ENCODE measurements at regions of chr11 and their contacts with region 1.

Region 1: GRCh38 chr11:46238967-46239800 is 38.3 kb upstream of the CREB3L1 start:
- DNase-seq: peak; percentile 67 to 81 (median 77)
- H3K4me3 ChIP-seq: peak overlapping the region; percentile 40 to 81
- H3K4me3 Mint-ChIP-seq: peak overlapping the region; percentile 35 to 90 (median 75)
- H3K27ac ChIP-seq: no peak overlapping the region
- H3K27ac Mint-ChIP-seq: peak overlapping the region in 2 of 7 donors; percentile 42 to 60
- H3K4me1 ChIP-seq: peaks cover 30% of the 10 kb centered on the region
- H3K4me1 Mint-ChIP-seq: peaks cover 18 to 49% (median 24%) of the 10 kb centered on the region in 4 donors
- H3K27me3 ChIP-seq: peaks cover 6% of the 10 kb centered on the region
- H3K27me3 Mint-ChIP-seq: peaks cover 14 to 16% of the 10 kb centered on the region in 2 donors

Region 2: DNA sequence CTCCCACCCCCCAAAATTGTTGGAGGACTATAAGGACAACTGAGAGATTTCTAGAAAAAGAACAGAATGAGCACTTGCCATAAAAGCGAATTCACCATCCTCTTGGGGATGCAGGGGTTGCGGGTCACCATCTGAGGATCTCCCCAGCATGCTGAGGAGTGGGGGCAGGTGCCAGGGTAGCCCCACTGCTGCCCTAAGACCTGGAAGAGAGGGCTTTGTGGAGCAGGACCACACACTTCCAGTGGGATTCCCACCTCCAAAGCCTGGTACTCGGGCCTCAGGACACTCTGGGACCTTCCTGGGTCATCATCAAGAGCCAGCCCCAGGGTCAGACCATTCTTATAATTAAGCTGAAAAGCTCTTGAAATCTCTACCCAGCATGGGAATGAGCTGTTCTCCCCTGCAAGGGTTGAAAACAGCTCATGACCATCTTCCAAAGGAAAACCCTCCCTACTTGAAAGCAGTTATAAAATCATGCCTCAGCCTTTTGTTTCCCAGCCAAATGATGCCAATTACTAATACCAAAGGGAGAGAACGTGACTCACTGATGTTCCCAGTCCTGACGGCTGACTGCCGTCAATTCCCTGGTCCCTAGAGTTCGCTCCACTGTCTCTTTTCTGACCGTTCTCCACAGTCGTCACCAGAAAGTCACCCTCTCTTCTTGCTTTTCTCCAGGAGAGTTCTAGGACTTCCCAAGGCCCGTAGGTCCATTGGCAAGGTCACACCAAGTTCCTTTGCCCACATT is 38.5 kb before region 1 on chr11:
- CTCF ChIA-PET with region 1: no interaction called
- POLR2A ChIA-PET with region 1: no interaction called
- intact Hi-C with region 1: no loop called
- DNase-seq: no peak
- H3K4me3 ChIP-seq: no peak overlapping the region
- H3K4me3 Mint-ChIP-seq: no peak overlapping the region
- H3K27ac ChIP-seq: no peak overlapping the region
- H3K27ac Mint-ChIP-seq: no peak overlapping the region
- H3K4me1 ChIP-seq: no peaks in the 10 kb centered on the region
- H3K4me1 Mint-ChIP-seq: no peaks in the 10 kb centered on the region
- H3K27me3 ChIP-seq: no peaks in the 10 kb centered on the region
- H3K27me3 Mint-ChIP-seq: peaks cover 18 to 26% of the 10 kb centered on the region in 2 donors

Region 3: GRCh38 chr11:46249103-46249937 is 10.1 kb after region 1 on chr11:
- CTCF ChIA-PET with region 1: interaction called, 13 read pairs
- POLR2A ChIA-PET with region 1: no interaction called
- intact Hi-C with region 1: no loop called
- DNase-seq: no peak
- H3K4me3 ChIP-seq: no peak overlapping the region
- H3K4me3 Mint-ChIP-seq: no peak overlapping the region
- H3K27ac ChIP-seq: no peak overlapping the region
- H3K27ac Mint-ChIP-seq: no peak overlapping the region
- H3K4me1 ChIP-seq: no peaks in the 10 kb centered on the region
- H3K4me1 Mint-ChIP-seq: no peaks in the 10 kb centered on the region
- H3K27me3 ChIP-seq: no peaks in the 10 kb centered on the region
- H3K27me3 Mint-ChIP-seq: no peaks in the 10 kb centered on the region

Region 4: DNA sequence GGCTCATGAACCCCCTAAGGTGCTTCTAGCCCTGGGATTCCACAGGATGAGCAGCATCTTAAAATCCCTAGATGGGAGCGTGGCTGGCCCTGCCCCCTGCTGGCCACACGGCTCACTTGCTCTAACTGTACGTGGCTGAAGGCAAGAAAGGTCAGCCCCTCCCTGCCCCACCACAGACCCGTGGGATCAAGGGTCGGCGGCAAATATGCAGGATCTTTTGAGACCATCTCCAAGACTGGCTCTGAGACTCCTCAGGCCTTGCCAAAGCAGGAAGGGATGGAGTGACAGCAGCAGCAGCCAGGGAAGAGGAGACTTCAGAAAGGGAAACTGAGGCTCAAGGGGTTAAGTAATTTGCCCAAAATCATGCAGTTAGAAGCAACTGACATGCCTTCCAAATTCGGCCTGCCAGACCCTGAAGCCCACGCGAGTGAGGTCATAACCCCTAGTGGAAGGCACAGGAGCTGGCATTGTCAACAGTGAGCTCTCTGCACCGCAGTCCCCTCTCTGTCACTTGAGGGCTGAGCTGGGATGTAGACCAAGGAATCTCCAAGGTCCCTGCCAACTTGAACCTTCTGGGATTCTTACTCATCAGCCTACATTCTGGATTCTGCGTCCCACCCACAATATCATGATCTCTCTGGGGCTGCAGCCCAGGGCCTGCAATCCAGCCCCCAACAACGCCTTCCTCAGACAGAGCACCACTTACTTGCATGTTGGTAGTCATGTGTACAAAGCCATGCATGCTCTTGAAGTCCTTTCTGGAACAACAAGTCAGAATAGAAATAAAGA is 69.6 kb after region 1 on chr11:
- CTCF ChIA-PET with region 1: interaction called, 279 read pairs
- POLR2A ChIA-PET with region 1: no interaction called
- intact Hi-C with region 1: loop called (anchors 1 kb)
- DNase-seq: peak; percentile 44 to 61 (median 53)
- H3K4me3 ChIP-seq: no peak overlapping the region
- H3K4me3 Mint-ChIP-seq: no peak overlapping the region
- H3K27ac ChIP-seq: no peak overlapping the region
- H3K27ac Mint-ChIP-seq: peak overlapping the region in 1 of 7 donors; percentile 69
- H3K4me1 ChIP-seq: peaks cover 6% of the 10 kb centered on the region
- H3K4me1 Mint-ChIP-seq: peaks cover 4 to 11% (median 6%) of the 10 kb centered on the region in 4 donors
- H3K27me3 ChIP-seq: no peaks in the 10 kb centered on the region
- H3K27me3 Mint-ChIP-seq: no peaks in the 10 kb centered on the region

Region 5: GRCh38 chr11:46367244-46367915 is 128.2 kb after region 1 on chr11:
- CTCF ChIA-PET with region 1: interaction called, 6 read pairs
- POLR2A ChIA-PET with region 1: no interaction called
- intact Hi-C with region 1: loop called (anchors 1 kb)
- DNase-seq: peak; percentile 68 to 74 (median 73)
- H3K4me3 ChIP-seq: no peak overlapping the region
- H3K4me3 Mint-ChIP-seq: no peak overlapping the region
- H3K27ac ChIP-seq: peak overlapping the region; percentile 22
- H3K27ac Mint-ChIP-seq: peak overlapping the region in 3 of 7 donors; percentile 24 to 53 (median 42)
- H3K4me1 ChIP-seq: peaks cover 55% of the 10 kb centered on the region
- H3K4me1 Mint-ChIP-seq: peaks cover 21 to 55% (median 40%) of the 10 kb centered on the region in 4 donors
- H3K27me3 ChIP-seq: no peaks in the 10 kb centered on the region
- H3K27me3 Mint-ChIP-seq: no peaks in the 10 kb centered on the region